Activated CD4-positive, alpha-beta memory T cell treated with anti-CD3 and anti-CD28 coated beads for 36 hours (primary cell): ENCODE measurements at regions of chr4 and their contacts with region 1.

Region 1: GRCh38 chr4:118586357-118586790 is 98.8 kb upstream of the METTL14 start:
- DNase-seq: no peak
- H3K4me3 Mint-ChIP-seq: no peak overlapping the region
- H3K27ac Mint-ChIP-seq: no peak overlapping the region
- H3K4me1 Mint-ChIP-seq: peaks cover 4% of the 10 kb centered on the region
- H3K27me3 Mint-ChIP-seq: peaks cover 23% of the 10 kb centered on the region

Region 2: DNA sequence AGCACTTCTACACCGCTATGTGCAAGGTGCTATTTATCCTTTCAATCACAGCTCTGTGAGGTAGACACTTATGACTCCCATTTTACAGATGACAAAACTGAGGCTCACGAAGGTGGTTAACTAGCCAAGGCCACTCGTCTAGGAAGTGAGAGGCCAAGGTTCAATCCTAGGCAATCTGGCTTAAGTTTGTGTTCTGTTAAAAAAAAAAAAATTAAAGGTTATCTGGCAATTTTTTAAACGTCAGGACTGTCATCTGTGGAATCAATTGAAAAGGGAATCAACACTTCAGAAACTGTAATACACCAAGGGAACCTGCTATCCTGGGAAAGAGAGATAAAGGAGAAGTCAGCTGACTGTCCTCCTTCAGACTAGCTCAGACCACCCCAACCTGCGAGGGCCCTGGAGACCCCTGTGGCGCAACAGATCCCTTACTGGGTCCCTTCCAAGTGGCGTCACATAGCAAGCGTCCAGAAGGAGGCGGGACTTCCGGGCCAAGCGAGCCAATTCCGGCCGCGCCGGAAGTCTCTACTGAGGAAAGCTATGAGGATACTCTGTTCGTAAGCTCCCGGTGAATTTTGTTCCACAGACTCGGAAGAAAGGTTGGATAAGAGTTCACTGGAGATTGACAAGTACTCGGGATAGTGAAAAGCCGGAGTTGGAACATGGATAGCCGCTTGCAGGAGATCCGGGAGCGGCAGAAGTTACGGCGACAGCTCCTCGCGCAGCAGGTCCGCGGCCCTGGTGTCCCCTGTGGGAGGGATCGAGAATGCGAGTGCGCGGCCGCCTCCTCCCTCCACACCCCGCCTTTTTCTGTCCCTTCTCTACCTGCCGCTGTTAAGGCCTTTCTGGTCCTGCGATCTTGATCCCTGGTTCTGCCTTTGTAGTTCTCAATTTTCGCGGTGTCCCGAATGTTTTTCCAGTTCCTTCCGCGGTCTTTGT is 98.8 kb after region 1 on chr4 and contains the start of gene METTL14:
- CTCF ChIA-PET with region 1: no interaction called
- POLR2A ChIA-PET with region 1: no interaction called
- intact Hi-C with region 1: loop called (anchors 1 kb)
- DNase-seq: peak; percentile 93
- H3K4me3 Mint-ChIP-seq: peak within 1 kb of the TSS; percentile 97
- H3K27ac Mint-ChIP-seq: peak within 1 kb of the TSS; percentile 94
- H3K4me1 Mint-ChIP-seq: peaks cover 24% of the 10 kb centered on the region
- H3K27me3 Mint-ChIP-seq: no peaks in the 10 kb centered on the region
- total RNA-seq, gene METTL14: 39.8 to 48.3 TPM